GM10248 (cell line): ENCODE measurements at regions of chr11 and their contacts with region 1.

Region 1: GRCh38 chr11:58629857-58630256 is 7.4 kb downstream of the CNTF start:
- DNase-seq: peak; percentile 58
- CTCF ChIP-seq: peak; percentile 69

Region 2: DNA sequence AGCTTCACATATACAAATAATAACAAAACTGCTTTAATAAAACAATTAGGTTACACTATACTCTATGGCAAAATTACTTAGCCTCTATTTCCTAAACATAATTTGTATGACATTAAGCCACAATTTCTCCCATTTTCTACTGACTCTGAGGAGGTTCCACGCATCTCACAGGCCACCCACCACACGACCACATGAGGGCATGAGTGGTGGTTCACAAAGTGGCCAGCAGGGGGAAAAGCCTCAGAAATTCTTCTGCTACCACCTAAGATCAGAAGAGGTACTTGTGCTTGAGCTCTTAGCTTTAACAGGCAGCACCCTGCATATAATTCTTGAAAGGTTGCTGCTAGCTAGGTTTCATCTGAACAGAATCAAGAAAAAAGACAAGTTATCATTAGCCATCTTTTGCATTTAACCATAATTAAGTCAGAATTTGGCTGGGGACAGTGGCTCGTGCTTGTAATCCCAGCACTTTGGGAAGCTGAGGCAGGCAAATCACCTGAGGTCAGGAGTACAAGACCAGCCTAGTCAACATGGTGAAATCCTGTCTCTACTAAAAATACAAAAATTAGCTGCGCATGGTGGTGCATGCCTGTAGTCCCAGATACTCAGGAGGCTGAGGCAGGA is 61.9 kb before region 1 on chr11:
- CTCF ChIA-PET with region 1: interaction called, 49 read pairs
- POLR2A ChIA-PET with region 1: interaction called, 3 read pairs
- DNase-seq: peak; percentile 45
- CTCF ChIP-seq: peak; percentile 64

Region 3: DNA sequence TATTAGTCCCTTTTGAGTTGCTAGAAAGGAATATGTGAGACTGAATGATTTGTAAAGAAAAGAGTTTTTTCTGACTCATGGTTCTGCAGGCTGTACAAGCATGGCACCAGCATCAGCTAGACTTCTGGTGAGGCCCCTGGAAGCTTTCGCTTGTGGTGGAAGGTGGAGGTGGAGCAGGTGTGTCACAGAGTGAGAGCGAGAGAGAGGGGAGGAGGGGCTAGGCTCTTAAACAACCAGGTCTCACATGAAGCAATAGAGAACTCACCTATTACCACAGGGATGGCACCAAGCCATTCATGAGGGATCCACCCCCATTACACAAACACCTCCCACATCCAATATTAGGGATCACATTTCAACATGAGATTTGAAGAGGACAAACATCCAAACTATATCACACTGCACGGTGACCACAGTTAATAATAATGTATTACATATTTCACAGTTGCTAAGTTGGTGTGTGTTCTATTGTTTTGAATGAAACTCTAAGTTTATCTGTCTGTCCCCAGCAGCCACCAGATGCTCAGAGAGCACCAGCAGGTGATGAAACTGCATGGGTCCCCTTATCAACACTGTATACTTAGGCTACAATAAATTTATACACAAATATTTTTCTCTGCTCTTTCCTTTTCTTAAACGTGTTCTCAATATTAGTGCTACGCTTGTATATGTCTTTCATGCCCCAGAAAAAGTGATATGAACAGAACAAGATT is 36.9 kb before region 1 on chr11:
- CTCF ChIA-PET with region 1: interaction called, 12 read pairs
- POLR2A ChIA-PET with region 1: no interaction called
- DNase-seq: no peak
- CTCF ChIP-seq: no peak

Region 4: DNA sequence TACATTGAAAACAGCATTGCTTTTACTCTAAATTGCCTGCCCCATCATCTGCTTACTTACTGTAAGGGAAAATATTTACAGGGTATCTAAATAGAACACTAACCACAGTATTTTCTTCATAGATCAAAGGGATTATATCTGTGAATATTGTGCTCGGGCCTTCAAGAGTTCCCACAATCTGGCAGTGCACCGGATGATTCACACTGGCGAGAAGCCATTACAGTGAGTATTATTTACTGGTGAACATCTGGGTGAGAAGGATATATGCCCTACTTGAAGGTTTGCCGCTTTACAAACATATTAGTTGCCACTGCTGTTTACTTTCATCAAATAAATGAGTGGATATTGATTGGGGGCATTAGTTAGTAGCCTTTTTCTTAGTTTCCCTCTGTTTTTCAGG is 13.3 kb before region 1 on chr11:
- CTCF ChIA-PET with region 1: interaction called, 34 read pairs
- POLR2A ChIA-PET with region 1: no interaction called
- DNase-seq: no peak
- CTCF ChIP-seq: no peak

Region 5: DNA sequence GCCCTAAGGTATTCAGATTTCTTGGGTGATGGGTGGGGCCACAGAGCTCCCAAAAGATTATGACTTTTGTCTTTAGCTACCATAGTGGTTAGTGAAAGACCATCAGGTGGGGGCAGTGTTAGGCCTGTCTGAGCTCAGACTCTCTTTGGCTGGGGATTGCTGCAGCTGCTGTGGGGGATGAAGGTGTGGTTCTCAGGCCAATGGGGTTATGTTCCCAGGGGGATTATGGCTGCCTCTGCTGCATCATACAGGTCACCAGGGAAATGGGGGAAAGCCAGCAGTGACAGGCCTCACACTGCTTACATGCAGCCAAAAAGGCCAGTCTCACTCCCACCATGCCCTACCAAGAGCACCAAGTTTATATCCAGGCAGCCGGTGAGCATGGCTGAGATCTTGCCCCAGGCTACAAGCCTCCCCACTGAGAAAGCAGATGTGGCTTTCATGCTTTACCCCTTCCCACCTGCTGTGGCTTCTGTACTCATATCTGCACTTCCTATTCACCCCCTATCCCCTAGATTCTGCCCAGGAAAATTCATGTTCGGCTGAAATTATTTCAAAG is 17.4 kb after region 1 on chr11:
- CTCF ChIA-PET with region 1: interaction called, 93 read pairs
- POLR2A ChIA-PET with region 1: no interaction called
- DNase-seq: no peak
- CTCF ChIP-seq: peak; percentile 17